Right ventricle myocardium superior (tissue), 1 donor: ENCODE measurements at regions of chr5 and their contacts with region 1.

Region 1: GRCh38 chr5:68252673-68253623 is 37.4 kb downstream of the PIK3R1 start:
- DNase-seq: no peak
- ATAC-seq: peak; percentile 68

Region 2: GRCh38 chr5:67246108-67246507 is 1006.8 kb before region 1 on chr5:
- intact Hi-C with region 1: loop called (anchors 10 kb)
- DNase-seq: no peak
- ATAC-seq: peak; percentile 76

Region 3: GRCh38 chr5:67493676-67494075 is 759.3 kb before region 1 on chr5:
- intact Hi-C with region 1: loop called (anchors 10 kb)
- DNase-seq: peak; percentile 48
- ATAC-seq: peak; percentile 93

Region 4: DNA sequence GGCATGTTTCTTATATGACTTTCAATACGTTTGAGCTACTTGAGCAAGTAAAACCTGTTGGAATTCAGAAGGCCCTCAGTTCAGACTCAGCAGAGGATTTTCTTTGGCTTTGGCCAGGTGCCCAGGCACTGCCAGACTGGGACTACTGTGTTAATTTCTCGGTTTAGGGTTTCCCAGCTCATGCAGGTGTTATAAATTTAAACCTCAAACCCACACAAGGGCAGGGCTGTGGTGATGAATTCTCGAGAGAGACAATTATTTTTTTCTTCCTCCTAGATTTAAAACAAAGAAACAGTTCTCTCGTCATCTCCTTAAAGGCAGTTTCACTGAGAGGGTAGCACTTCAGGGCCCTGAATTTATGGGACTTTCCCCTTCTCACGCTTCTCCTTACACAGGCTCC is 443.4 kb before region 1 on chr5:
- intact Hi-C with region 1: loop called (anchors 10 kb)
- DNase-seq: no peak
- ATAC-seq: no peak

Region 5: GRCh38 chr5:67870662-67871061 is 382.3 kb before region 1 on chr5:
- intact Hi-C with region 1: no loop called
- DNase-seq: no peak
- ATAC-seq: no peak